Panc1 (cell line): ENCODE measurements at regions of chr1 and their contacts with region 1.

Region 1: GRCh38 chr1:23539698-23540266 is 8.7 kb upstream of the E2F2 start:
- DNase-seq: peak; percentile 91
- ATAC-seq: peak; percentile 95
- H3K4me3 ChIP-seq: peak overlapping the region; percentile 30 to 52
- H3K27ac ChIP-seq: peak overlapping the region; percentile 20; the same call in 1 of the 2 replicates
- H3K4me1 ChIP-seq: peaks cover 8% of the 10 kb centered on the region; the same call in 1 of the 2 replicates
- H3K27me3 ChIP-seq: no peaks in the 10 kb centered on the region
- CTCF ChIP-seq: peak; percentile 97

Region 2: DNA sequence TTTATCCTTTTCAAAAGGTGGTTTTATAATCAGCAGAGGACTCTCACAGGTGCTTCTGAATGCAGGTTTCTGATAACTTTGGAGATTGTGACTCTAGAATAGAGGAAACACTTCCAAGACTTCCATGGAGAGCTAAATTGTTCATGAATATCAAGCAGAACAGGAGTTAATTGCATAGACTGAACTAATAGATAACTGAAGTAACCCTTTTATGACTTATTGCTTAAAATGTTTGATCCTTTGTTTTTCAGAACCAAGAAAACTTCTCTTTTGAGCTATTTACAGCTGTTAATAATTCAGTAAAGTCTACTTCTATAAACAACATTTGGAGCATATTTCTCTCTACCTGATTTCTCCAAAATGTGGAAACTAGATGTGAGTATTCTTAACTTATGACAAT is 544.0 kb before region 1 on chr1:
- CTCF ChIA-PET with region 1: no interaction called
- POLR2A ChIA-PET with region 1: no interaction called
- in situ Hi-C with region 1: no loop called
- intact Hi-C with region 1: no loop called
- DNase-seq: no peak
- ATAC-seq: no peak
- H3K4me3 ChIP-seq: no peak overlapping the region
- H3K27ac ChIP-seq: no peak overlapping the region
- H3K4me1 ChIP-seq: no peaks in the 10 kb centered on the region
- H3K27me3 ChIP-seq: no peaks in the 10 kb centered on the region
- CTCF ChIP-seq: no peak

Region 3: GRCh38 chr1:23290836-23291565 is 248.8 kb before region 1 on chr1:
- CTCF ChIA-PET with region 1: no interaction called
- POLR2A ChIA-PET with region 1: interaction called, 12 read pairs
- in situ Hi-C with region 1: no loop called
- intact Hi-C with region 1: no loop called
- DNase-seq: no peak
- ATAC-seq: no peak
- H3K4me3 ChIP-seq: no peak overlapping the region
- H3K27ac ChIP-seq: no peak overlapping the region
- H3K4me1 ChIP-seq: no peaks in the 10 kb centered on the region
- H3K27me3 ChIP-seq: no peaks in the 10 kb centered on the region
- CTCF ChIP-seq: no peak

Region 4: GRCh38 chr1:23496490-23497181 is 43.1 kb before region 1 on chr1:
- CTCF ChIA-PET with region 1: interaction called, 31 read pairs
- POLR2A ChIA-PET with region 1: no interaction called
- in situ Hi-C with region 1: no loop called
- intact Hi-C with region 1: loop called (anchors 1 kb)
- DNase-seq: no peak
- ATAC-seq: peak; percentile 49
- H3K4me3 ChIP-seq: no peak overlapping the region
- H3K27ac ChIP-seq: no peak overlapping the region
- H3K4me1 ChIP-seq: no peaks in the 10 kb centered on the region
- H3K27me3 ChIP-seq: no peaks in the 10 kb centered on the region
- CTCF ChIP-seq: no peak

Region 5: GRCh38 chr1:23908493-23909341 is 368.9 kb after region 1 on chr1:
- CTCF ChIA-PET with region 1: no interaction called
- POLR2A ChIA-PET with region 1: no interaction called
- in situ Hi-C with region 1: no loop called
- intact Hi-C with region 1: no loop called
- DNase-seq: no peak
- ATAC-seq: no peak
- H3K4me3 ChIP-seq: no peak overlapping the region
- H3K27ac ChIP-seq: no peak overlapping the region
- H3K4me1 ChIP-seq: no peaks in the 10 kb centered on the region
- H3K27me3 ChIP-seq: peaks cover under 1% of the 10 kb centered on the region; the same call in 1 of the 2 replicates
- CTCF ChIP-seq: no peak